ENCODE measurements at regions of chrX and their contacts with region 1.

Region 1: GRCh38 chrX:103774070-103774642 is 2.5 kb upstream of the PLP1 start:
- DNase-seq: no peak
- H3K4me3 ChIP-seq: no peak overlapping the region
- H3K27ac ChIP-seq: no peak overlapping the region
- H3K4me1 ChIP-seq: no peaks in the 10 kb centered on the region
- H3K27me3 ChIP-seq: no peaks in the 10 kb centered on the region
- CTCF ChIP-seq: peak in 2 of 3 experiments; percentile 20 to 47

Region 2: GRCh38 chrX:103711533-103712369 is 62.4 kb before region 1 on chrX:
- intact Hi-C with region 1: loop called (anchors 5 kb)
- DNase-seq: no peak
- H3K4me3 ChIP-seq: no peak overlapping the region
- H3K27ac ChIP-seq: no peak overlapping the region
- H3K4me1 ChIP-seq: no peaks in the 10 kb centered on the region
- H3K27me3 ChIP-seq: no peaks in the 10 kb centered on the region
- CTCF ChIP-seq: peak; percentile 34 to 52 (median 51)

Measured in ascending aorta (tissue), 2 donors.